Left ventricle myocardium inferior (tissue), 1 donor: ENCODE measurements at regions of chr2 and their contacts with region 1.

Region 1: GRCh38 chr2:219171231-219171651 is 1.4 kb upstream of the SLC23A3 start:
- DNase-seq: peak; percentile 29
- H3K4me3 ChIP-seq: no peak overlapping the region
- H3K27ac ChIP-seq: peak overlapping the region; percentile 63
- H3K4me1 ChIP-seq: peaks cover 37% of the 10 kb centered on the region
- H3K27me3 ChIP-seq: no peaks in the 10 kb centered on the region
- CTCF ChIP-seq: peak; percentile 76

Region 2: GRCh38 chr2:219294356-219295351 is 123.4 kb after region 1 on chr2:
- intact Hi-C with region 1: loop called (anchors 5 kb)
- DNase-seq: peak; percentile 86
- H3K4me3 ChIP-seq: peak overlapping the region; percentile 77
- H3K27ac ChIP-seq: peak overlapping the region; percentile 89
- H3K4me1 ChIP-seq: peaks cover 22% of the 10 kb centered on the region
- H3K27me3 ChIP-seq: peaks cover 12% of the 10 kb centered on the region
- CTCF ChIP-seq: peak; percentile 99